Body of pancreas (tissue), 4 donors: ENCODE measurements at regions of chr12 and their contacts with region 1.

Region 1: GRCh38 chr12:122793685-122794106 is 19.3 kb downstream of the CCDC62 start:
- DNase-seq: peak in 2 of 4 donors; percentile 19 to 44
- ATAC-seq: peak; percentile 86
- H3K4me3 ChIP-seq: no peak overlapping the region
- H3K27ac ChIP-seq: no peak overlapping the region
- H3K4me1 ChIP-seq: peaks cover 19% of the 10 kb centered on the region
- H3K27me3 ChIP-seq: no peaks in the 10 kb centered on the region
- CTCF ChIP-seq: peak; percentile 54 to 81 (median 72)
- POLR2A ChIP-seq: no peak

Region 2: GRCh38 chr12:122845041-122845864 is 51.6 kb after region 1 on chr12:
- intact Hi-C with region 1: loop called (anchors 5 kb)
- DNase-seq: peak in 2 of 4 donors; percentile 25 to 31
- ATAC-seq: no peak
- H3K4me3 ChIP-seq: no peak overlapping the region
- H3K27ac ChIP-seq: peak overlapping the region in 3 of 4 donors; percentile 9 to 45 (median 33)
- H3K4me1 ChIP-seq: peaks cover 63% of the 10 kb centered on the region
- H3K27me3 ChIP-seq: no peaks in the 10 kb centered on the region
- CTCF ChIP-seq: no peak
- POLR2A ChIP-seq: no peak